Heart right ventricle (tissue), 16 donors: ENCODE measurements at regions of chr2 and their contacts with region 1.

Region 1: GRCh38 chr2:151171186-151171585 is 90.5 kb downstream of the RBM43 start:
- DNase-seq: no peak
- ATAC-seq: no peak
- H3K4me3 ChIP-seq: no peak overlapping the region
- H3K27ac ChIP-seq: no peak overlapping the region
- H3K4me1 ChIP-seq: no peaks in the 10 kb centered on the region
- H3K27me3 ChIP-seq: peaks cover 0 to 16% (median 0%) of the 10 kb centered on the region in 7 donors
- CTCF ChIP-seq: no peak

Region 2: GRCh38 chr2:152962446-152962845 is 1791.3 kb after region 1 on chr2:
- intact Hi-C with region 1: loop called in 1 of 10 experiments (anchors 5 kb)
- DNase-seq: no peak
- ATAC-seq: no peak
- H3K4me3 ChIP-seq: no peak overlapping the region
- H3K27ac ChIP-seq: no peak overlapping the region
- H3K4me1 ChIP-seq: no peaks in the 10 kb centered on the region
- H3K27me3 ChIP-seq: no peaks in the 10 kb centered on the region
- CTCF ChIP-seq: no peak